Naive thymus-derived CD8-positive, alpha-beta T cell (primary cell): ENCODE measurements at regions of chr1 and their contacts with region 1.

Region 1: DNA sequence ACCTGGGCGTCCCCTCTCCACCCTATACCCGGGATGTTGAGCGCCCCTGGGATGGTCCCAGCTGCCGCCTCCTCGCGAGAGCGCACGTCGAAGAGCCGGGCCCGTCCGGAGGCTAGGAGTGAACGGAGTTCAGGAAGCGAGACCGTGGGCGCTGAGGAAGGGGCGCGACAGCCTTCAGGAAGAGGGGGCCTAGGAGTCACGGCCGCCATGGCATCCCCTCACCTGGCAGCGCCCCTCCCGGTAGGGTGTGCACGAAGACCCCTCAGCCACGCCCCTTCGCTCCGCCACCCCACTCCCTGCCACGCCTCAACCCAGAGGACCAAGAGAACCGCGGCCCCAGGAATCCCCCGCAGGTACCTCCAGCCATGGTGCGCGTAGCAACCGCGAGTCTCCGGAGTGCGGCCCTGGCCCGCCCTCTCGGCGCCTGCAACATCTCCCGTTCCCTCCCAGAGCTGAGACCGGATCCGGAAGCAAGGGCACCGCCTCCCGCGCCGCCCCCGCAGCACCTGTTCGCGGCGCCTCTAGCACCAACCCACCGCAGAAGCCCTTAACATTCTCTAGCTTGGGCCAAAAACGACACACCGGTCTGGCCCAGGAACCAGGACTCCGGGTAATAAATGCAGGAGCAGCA is at the start of gene TSTD1:
- DNase-seq: peak; percentile 77 to 91 (median 88)
- ATAC-seq: peak; percentile 89 to 91
- H3K4me3 Mint-ChIP-seq: peak within 1 kb of the TSS; percentile 89 to 97 (median 94)
- H3K27ac Mint-ChIP-seq: peak within 1 kb of the TSS; percentile 87 to 98 (median 96)
- H3K4me1 Mint-ChIP-seq: peaks cover 19 to 71% (median 47%) of the 10 kb centered on the region in 4 donors
- H3K27me3 Mint-ChIP-seq: no peaks in the 10 kb centered on the region
- polyA plus RNA-seq, gene TSTD1: 342 to 508 (median 412) TPM

Region 2: GRCh38 chr1:160997323-160998038 is 41.2 kb before region 1 on chr1:
- POLR2A ChIA-PET with region 1: interaction called, 13 read pairs
- DNase-seq: peak; percentile 15 to 78 (median 39)
- ATAC-seq: peak; percentile 76 to 94
- H3K4me3 Mint-ChIP-seq: no peak overlapping the region
- H3K27ac Mint-ChIP-seq: peak overlapping the region in 9 of 10 donors; percentile 3 to 83 (median 54)
- H3K4me1 Mint-ChIP-seq: peaks cover 5 to 9% (median 6%) of the 10 kb centered on the region in 4 donors
- H3K27me3 Mint-ChIP-seq: no peaks in the 10 kb centered on the region

Region 3: DNA sequence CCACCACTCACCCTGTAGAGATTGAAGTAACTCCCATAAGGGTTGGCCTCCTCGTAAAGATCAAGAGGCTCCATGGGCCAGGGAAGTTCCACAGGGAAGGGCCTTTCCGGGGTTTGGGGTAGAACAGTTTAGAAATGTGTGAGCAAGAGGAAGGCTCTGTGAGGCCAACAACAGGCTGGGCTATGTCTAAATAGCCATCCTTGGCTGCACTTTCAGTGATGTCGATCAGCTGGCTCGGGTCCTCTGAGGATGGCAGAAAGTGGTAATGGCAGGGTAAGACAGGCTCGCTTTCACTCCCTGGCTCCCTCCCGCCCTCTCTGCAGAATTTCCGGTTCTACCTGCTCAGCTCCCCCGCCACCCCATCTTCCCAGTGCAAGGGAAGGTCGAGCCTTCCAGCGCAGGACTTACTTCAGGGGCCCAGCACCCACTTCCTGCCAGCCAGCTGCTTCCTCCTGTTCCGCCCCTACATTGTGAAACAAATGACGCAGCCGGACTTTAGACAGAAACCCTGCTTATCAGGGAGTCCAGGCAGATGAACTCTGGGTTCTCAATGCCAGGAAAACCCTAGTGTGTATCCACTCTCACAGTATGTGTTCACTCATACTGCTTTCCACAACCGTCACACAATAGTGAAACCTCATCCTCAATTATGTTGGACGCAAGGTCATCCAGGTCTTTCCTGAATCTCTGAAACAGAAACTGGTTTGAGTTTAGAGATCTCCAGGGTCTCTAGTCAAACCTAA is 25.0 kb before region 1 on chr1:
- POLR2A ChIA-PET with region 1: interaction called, 65 read pairs
- DNase-seq: peak; percentile 30 to 77 (median 58)
- ATAC-seq: peak; percentile 89 to 91
- H3K4me3 Mint-ChIP-seq: peak overlapping the region; percentile 73 to 89 (median 83)
- H3K27ac Mint-ChIP-seq: peak overlapping the region; percentile 86 to 99 (median 95)
- H3K4me1 Mint-ChIP-seq: peaks cover 15 to 41% (median 33%) of the 10 kb centered on the region in 4 donors
- H3K27me3 Mint-ChIP-seq: no peaks in the 10 kb centered on the region

Region 4: DNA sequence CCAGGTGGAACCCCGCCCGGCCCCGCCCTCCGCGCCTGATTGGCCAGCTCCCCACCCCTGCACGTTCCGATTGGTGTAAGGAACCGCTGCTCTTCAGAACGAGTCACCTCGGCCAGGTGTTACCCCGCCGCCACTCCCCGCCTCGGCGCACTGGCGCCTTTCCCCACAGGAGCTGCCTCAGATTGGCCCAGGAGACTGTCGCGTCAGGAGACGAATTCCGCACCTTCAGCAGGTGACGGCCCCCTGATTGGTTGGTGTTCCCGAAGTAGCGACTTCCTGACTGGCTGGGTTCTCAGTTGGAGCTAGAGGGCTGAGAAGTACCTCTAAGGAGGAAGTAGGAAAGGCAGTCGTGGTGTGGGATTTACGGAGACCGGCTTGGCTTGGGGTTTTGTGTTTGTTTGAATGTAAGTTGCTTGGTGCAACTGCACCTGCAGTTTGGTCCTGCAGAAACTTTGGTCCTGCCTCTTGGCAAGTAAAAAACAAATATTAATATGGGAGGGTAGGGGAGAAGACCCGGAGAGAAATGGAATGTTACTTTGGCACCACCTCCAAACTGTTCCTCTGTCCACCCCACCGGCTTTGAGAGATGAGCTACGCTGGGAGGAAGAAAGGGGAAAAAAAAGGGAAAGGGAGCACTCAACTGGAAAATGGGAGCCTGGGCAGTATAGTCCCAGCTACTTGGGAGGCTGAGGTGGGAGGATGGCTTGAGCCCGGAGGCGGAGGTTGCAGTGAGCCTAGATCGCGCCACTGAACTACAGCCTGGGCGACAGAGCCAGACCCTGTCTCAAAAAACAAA is 17.3 kb before region 1 on chr1:
- POLR2A ChIA-PET with region 1: interaction called, 65 read pairs
- DNase-seq: peak; percentile 78 to 95 (median 90)
- ATAC-seq: peak; percentile 94 to 97
- H3K4me3 Mint-ChIP-seq: peak overlapping the region; percentile 85 to 97 (median 90)
- H3K27ac Mint-ChIP-seq: peak overlapping the region; percentile 62 to 98 (median 94)
- H3K4me1 Mint-ChIP-seq: peaks cover 28 to 51% (median 45%) of the 10 kb centered on the region in 4 donors
- H3K27me3 Mint-ChIP-seq: peaks cover 0 to 2% (median 0%) of the 10 kb centered on the region in 5 donors

Region 5: GRCh38 chr1:161098210-161099068 is 59.8 kb after region 1 on chr1 and contains the start of gene KLHDC9:
- POLR2A ChIA-PET with region 1: interaction called, 41 read pairs
- DNase-seq: peak; percentile 33 to 79 (median 60)
- ATAC-seq: peak; percentile 71 to 78
- H3K4me3 Mint-ChIP-seq: peak within 1 kb of the TSS; percentile 83 to 96 (median 92)
- H3K27ac Mint-ChIP-seq: peak within 1 kb of the TSS; percentile 83 to 100 (median 88)
- H3K4me1 Mint-ChIP-seq: peaks cover 16 to 29% (median 25%) of the 10 kb centered on the region in 4 donors
- H3K27me3 Mint-ChIP-seq: peaks cover 0 to 4% (median 0%) of the 10 kb centered on the region in 5 donors
- polyA plus RNA-seq, gene KLHDC9: 0.30 to 1.5 (median 0.62) TPM

Region 6: GRCh38 chr1:161117759-161118581 is 79.3 kb after region 1 on chr1 and contains the starts of genes NIT1 and PFDN2:
- POLR2A ChIA-PET with region 1: interaction called, 10 read pairs
- DNase-seq: peak; percentile 76 to 88 (median 83)
- ATAC-seq: peak; percentile 82 to 86
- H3K4me3 Mint-ChIP-seq: peak within 1 kb of the TSS; percentile 91 to 97 (median 95)
- H3K27ac Mint-ChIP-seq: peak within 1 kb of the TSS; percentile 77 to 98 (median 95)
- H3K4me1 Mint-ChIP-seq: peaks cover 36 to 90% (median 68%) of the 10 kb centered on the region in 4 donors
- H3K27me3 Mint-ChIP-seq: no peaks in the 10 kb centered on the region
- polyA plus RNA-seq, gene NIT1: 16.8 to 25.0 (median 18.3) TPM
- polyA plus RNA-seq, gene PFDN2: 74.6 to 91.3 (median 86.0) TPM

Region 7: DNA sequence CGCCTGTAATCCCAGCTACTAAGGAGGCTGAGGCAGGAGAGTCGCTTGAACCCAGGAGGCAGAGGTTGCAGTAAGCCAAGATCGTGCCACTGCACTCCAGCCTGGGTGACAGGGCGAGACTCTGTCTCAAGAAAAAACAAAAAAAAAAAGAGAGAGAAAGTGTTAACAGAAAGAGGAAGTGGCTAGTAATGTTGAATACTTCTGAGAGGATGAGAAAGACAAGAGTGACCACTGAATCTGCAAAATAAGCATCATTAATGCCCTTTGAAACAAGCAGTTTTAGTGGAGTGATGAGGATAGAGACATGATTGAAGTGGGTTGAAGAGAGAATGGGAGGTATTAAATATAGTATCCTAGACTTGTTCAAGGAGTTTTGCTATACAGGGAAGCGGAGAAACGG is 259.5 kb after region 1 on chr1:
- POLR2A ChIA-PET with region 1: no interaction called
- DNase-seq: no peak
- ATAC-seq: no peak
- H3K4me3 Mint-ChIP-seq: peak overlapping the region in 1 of 10 donors; percentile 12
- H3K27ac Mint-ChIP-seq: peak overlapping the region in 4 of 10 donors; percentile 1 to 78 (median 28)
- H3K4me1 Mint-ChIP-seq: peaks cover 2 to 15% (median 8%) of the 10 kb centered on the region in 4 donors
- H3K27me3 Mint-ChIP-seq: no peaks in the 10 kb centered on the region